ENCODE measurements at regions of chr11 and their contacts with region 1.

Region 1: DNA sequence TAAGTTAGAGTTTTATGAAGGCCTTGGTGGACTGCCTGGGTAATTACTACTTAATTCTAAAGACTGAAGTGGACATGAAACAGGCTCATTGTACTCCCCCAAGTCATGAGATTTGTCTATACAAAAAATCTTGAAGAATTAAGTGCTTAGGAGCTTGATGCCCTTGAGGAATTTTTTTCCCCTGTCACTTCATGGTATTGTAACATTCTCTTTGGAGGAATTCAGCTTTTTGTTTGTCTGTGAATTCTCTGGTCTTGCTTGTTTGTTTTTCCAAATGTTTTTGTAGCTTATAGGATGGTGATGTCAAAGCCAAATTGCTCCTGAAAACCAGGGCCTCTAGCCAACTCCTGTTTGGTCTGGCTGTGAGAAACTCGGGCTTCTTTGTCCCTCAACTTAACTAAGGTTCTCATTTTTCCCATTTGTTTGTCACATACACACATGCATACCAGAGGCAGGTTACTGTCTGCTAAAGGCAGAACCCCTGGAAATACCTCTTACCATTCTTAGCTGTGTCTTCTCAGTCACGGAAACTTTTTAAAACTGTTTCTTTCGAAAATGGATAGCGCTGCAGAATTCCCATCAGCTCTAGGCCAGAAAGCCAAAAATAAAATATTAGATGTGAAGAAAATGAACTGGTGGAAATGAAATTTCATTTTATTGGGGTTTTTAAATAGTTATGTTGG is 66.9 kb downstream of the AMOTL1 start:
- DNase-seq: no peak
- H3K4me3 ChIP-seq: no peak overlapping the region
- H3K4me3 Mint-ChIP-seq: no peak overlapping the region
- H3K27ac Mint-ChIP-seq: peak overlapping the region; percentile 87
- H3K4me1 ChIP-seq: peaks cover 63% of the 10 kb centered on the region
- H3K4me1 Mint-ChIP-seq: peaks cover 38% of the 10 kb centered on the region
- H3K27me3 ChIP-seq: no peaks in the 10 kb centered on the region
- H3K27me3 Mint-ChIP-seq: no peaks in the 10 kb centered on the region
- CTCF ChIP-seq: no peak

Region 2: GRCh38 chr11:94638902-94639373 is 196.1 kb before region 1 on chr11:
- CTCF ChIA-PET with region 1: no interaction called
- POLR2A ChIA-PET with region 1: no interaction called
- intact Hi-C with region 1: loop called (anchors 5 kb)
- DNase-seq: no peak
- H3K4me3 ChIP-seq: no peak overlapping the region
- H3K4me3 Mint-ChIP-seq: no peak overlapping the region
- H3K27ac Mint-ChIP-seq: no peak overlapping the region
- H3K4me1 ChIP-seq: peaks cover 29% of the 10 kb centered on the region
- H3K4me1 Mint-ChIP-seq: peaks cover 26% of the 10 kb centered on the region
- H3K27me3 ChIP-seq: no peaks in the 10 kb centered on the region
- H3K27me3 Mint-ChIP-seq: no peaks in the 10 kb centered on the region
- CTCF ChIP-seq: no peak

Region 3: DNA sequence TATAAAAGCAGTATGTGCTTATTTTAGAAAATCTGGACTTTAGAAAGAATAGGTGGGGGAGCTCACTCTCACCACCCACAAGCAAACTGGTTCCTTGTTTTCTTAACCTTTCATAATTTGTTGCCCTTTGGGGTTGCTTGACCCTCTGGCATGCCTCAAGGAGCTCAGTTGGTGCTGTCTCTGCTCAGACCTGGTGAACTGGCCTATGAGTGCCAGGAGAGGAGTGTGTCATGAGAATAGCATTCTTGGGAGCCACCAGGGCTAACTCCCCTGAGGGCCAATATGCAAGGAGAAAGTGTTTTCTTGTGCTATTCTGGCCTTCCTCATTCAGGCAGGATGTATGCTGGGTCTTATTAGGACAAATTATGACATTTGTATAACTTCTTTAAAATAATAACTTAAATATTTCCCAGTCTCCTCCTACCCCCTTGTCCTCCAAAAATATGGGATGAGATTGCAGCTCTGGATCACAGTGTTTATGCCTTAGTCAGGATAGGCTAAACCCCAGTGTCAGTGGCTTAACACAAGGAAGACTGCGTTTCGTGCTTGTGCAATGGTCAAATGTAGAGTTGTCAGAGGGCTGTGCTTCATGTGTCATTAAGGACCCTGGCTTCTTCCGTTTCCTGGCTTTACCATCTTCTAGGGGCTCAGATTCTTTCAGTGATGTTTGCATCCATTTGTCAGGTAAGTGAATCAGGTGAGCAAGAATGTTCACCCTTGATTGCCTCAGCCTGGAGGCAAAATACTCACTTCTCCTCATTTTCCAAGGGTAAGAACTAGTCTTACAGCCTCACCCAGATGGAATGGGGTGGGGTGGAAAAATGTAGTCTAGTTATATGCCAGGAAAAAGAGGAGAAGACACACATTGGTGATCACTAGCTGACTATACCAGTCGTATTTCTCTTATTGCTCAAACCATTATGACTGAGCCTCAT is 87.6 kb before region 1 on chr11:
- CTCF ChIA-PET with region 1: no interaction called
- POLR2A ChIA-PET with region 1: no interaction called
- intact Hi-C with region 1: loop called (anchors 1 kb)
- DNase-seq: peak; percentile 61 to 83
- H3K4me3 ChIP-seq: no peak overlapping the region
- H3K4me3 Mint-ChIP-seq: peak overlapping the region; percentile 30
- H3K27ac Mint-ChIP-seq: peak overlapping the region; percentile 45
- H3K4me1 ChIP-seq: peaks cover 51% of the 10 kb centered on the region
- H3K4me1 Mint-ChIP-seq: peaks cover 47% of the 10 kb centered on the region
- H3K27me3 ChIP-seq: no peaks in the 10 kb centered on the region
- H3K27me3 Mint-ChIP-seq: no peaks in the 10 kb centered on the region
- CTCF ChIP-seq: no peak

Region 4: GRCh38 chr11:94786264-94787126 is 48.6 kb before region 1 on chr11:
- CTCF ChIA-PET with region 1: interaction called, 4 read pairs
- POLR2A ChIA-PET with region 1: no interaction called
- intact Hi-C with region 1: loop called (anchors 1 kb)
- DNase-seq: peak in 1 of 2 experiments; percentile 65
- H3K4me3 ChIP-seq: no peak overlapping the region
- H3K4me3 Mint-ChIP-seq: no peak overlapping the region
- H3K27ac Mint-ChIP-seq: peak overlapping the region; percentile 70
- H3K4me1 ChIP-seq: peaks cover 58% of the 10 kb centered on the region
- H3K4me1 Mint-ChIP-seq: peaks cover 24% of the 10 kb centered on the region
- H3K27me3 ChIP-seq: no peaks in the 10 kb centered on the region
- H3K27me3 Mint-ChIP-seq: no peaks in the 10 kb centered on the region
- CTCF ChIP-seq: peak; percentile 75 to 89

Region 5: DNA sequence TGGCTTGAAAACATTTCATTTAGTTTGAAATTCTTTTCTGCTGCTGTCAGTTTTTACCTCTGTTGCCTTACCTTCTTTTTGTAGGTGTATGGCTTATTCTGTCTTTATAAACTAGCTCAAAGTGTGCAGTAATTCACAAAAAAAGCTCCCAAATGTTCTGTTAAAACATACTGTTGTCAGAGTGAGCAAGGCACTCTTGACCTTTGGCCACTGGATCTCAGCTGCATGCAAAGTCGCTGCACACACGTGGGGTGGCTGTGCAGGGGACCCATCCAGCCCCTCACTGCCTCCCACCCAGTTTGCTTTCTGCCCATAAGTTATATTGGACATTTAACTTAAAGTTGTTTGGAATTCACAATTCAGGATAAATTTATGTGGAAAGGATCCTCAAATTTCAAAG is 25.3 kb after region 1 on chr11:
- CTCF ChIA-PET with region 1: no interaction called
- POLR2A ChIA-PET with region 1: interaction called, 3 read pairs
- intact Hi-C with region 1: loop called (anchors 1 kb)
- DNase-seq: no peak
- H3K4me3 ChIP-seq: no peak overlapping the region
- H3K4me3 Mint-ChIP-seq: no peak overlapping the region
- H3K27ac Mint-ChIP-seq: no peak overlapping the region
- H3K4me1 ChIP-seq: peaks cover 27% of the 10 kb centered on the region
- H3K4me1 Mint-ChIP-seq: peaks cover 31% of the 10 kb centered on the region
- H3K27me3 ChIP-seq: no peaks in the 10 kb centered on the region
- H3K27me3 Mint-ChIP-seq: no peaks in the 10 kb centered on the region
- CTCF ChIP-seq: no peak

Measured in Caco-2 (cell line).